Astrocyte of the cerebellum (primary cell): ENCODE measurements at regions of chr2 and their contacts with region 1.

Region 1: GRCh38 chr2:158179660-158180059 is 78.0 kb downstream of the UPP2 start:
- DNase-seq: no peak
- H3K4me3 ChIP-seq: no peak overlapping the region
- CTCF ChIP-seq: peak; percentile 30

Region 2: DNA sequence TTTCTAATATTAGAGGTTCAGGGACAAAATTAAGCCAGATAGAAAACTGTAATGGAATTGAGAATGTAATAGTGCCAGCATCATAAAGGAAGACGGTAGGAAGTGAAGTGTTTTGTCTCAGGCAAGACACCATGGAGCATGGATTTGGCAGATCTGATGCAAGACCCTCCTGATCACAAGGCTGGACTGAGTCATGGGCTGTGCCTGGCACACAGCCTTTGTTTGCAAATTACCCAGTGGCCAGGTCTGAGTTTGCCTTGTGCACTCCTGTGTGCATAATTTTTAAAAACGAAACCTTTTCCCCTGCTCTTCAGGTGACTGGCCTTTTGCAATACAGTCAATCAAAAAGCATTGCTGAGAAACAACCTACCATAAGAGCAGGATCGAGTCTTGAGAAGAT is 79.9 kb before region 1 on chr2:
- in situ Hi-C with region 1: no loop called
- DNase-seq: no peak
- H3K4me3 ChIP-seq: no peak overlapping the region
- CTCF ChIP-seq: no peak

Region 3: DNA sequence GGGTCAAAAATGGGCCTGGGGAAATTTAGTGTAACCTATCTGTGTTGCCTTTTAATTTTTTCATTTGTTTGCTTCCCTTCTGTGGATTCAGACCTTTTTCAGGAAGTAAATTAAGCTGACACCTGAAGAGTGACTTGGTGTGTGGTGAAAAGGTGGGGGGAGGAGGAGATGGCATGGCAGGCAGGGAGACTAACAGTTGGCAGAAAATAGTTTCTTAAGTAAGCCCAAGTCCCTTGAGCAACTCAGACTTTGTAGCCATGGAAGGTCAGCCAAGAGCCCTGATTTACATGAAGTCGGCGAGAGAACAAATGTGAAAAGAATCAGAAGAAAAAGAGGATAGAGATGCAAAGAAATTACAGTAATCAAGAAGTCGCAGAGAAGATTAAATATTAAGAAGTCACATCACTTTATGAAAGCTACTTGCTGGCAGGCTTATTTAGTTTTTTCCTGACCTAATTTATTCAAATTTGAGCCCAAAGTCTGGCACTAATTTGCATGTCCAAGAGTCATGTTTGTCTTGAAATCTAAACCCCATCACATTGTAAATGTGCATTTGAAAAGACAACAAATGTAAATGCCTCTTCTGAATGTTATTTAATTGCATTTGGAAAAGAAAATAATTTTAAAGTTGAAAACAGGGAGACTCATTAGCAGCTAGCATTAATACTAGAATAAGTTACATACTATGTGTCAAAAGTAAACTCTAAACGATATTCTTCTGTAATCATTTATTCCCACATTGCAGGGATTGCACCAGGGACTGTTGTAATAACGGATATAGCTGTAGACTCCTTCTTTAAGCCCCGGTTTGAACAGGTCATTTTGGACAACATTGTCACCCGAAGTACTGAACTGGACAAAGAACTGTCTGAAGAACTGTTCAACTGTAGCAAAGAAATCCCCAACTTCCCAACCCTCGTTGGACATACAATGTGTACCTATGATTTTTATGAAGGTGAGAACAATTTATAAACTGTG is 58.7 kb before region 1 on chr2:
- in situ Hi-C with region 1: loop called (anchors 5 kb)
- DNase-seq: no peak
- H3K4me3 ChIP-seq: no peak overlapping the region
- CTCF ChIP-seq: no peak

Region 4: GRCh38 chr2:158912112-158912511 is 732.5 kb after region 1 on chr2:
- in situ Hi-C with region 1: no loop called
- DNase-seq: no peak
- H3K4me3 ChIP-seq: no peak overlapping the region
- CTCF ChIP-seq: no peak